ENCODE measurements at regions of chr18 and their contacts with region 1.

Region 1: GRCh38 chr18:22563098-22563707 is 145.5 kb upstream of the CTAGE1 start:
- DNase-seq: peak; percentile 93
- H3K4me3 ChIP-seq: peak overlapping the region; percentile 56
- H3K27ac ChIP-seq: peak overlapping the region; percentile 38; the same call in 1 of the 2 replicates
- H3K4me1 ChIP-seq: peaks cover 36% of the 10 kb centered on the region
- H3K27me3 ChIP-seq: no peaks in the 10 kb centered on the region

Region 2: DNA sequence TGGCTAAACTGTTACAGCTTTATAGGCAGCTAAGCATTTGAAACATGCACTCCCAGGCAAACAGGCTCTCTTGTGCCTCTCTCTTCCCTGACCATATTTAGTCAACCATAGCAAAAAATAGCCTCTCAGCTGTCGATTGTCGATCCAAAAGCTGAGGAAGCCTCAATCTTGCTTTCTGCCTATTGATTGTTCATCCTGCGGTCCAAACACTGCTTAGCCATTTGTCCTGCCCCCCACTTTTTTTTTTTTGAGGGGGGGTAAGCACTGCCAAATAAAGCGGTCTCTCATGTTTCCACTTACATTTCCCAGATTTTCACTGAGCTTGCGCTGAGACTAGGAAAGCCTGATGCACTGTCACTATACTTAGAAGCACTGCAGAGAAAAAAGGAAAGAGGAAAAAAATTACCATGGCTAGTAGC is 731.8 kb before region 1 on chr18:
- in situ Hi-C with region 1: no loop called
- DNase-seq: no peak
- H3K4me3 ChIP-seq: no peak overlapping the region
- H3K27ac ChIP-seq: no peak overlapping the region
- H3K4me1 ChIP-seq: peaks cover 12% of the 10 kb centered on the region
- H3K27me3 ChIP-seq: no peaks in the 10 kb centered on the region

Region 3: DNA sequence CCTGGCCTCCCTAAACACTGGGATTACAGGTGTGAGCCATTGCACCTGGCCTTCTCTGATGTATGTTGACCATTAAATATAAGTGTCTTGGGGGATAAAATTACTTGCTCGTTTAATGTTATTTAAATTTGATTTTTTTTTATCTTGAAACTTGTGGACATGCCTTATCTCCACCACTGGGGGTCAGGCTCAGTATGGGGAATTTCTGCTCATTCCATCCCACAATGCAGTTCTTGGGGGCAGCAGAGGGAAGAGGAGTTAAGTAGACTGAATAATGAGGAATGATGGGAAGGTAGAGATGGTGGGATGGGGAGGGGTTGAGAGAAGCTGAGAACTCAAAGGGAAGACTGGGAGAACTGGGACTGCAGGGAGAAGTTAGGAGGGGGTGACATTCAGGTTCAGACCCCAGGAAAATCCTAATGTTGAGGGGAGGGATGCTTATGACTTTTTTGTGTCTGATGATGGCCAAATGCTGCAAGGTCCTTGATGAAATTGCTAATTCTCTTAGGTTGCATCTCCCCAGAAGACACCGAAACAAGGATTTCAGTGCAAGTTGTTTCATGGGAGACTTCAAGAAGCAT is 648.4 kb before region 1 on chr18:
- in situ Hi-C with region 1: loop called (anchors 10 kb)
- DNase-seq: peak; percentile 70
- H3K4me3 ChIP-seq: no peak overlapping the region
- H3K27ac ChIP-seq: no peak overlapping the region
- H3K4me1 ChIP-seq: no peaks in the 10 kb centered on the region
- H3K27me3 ChIP-seq: peaks cover 25% of the 10 kb centered on the region

Region 4: DNA sequence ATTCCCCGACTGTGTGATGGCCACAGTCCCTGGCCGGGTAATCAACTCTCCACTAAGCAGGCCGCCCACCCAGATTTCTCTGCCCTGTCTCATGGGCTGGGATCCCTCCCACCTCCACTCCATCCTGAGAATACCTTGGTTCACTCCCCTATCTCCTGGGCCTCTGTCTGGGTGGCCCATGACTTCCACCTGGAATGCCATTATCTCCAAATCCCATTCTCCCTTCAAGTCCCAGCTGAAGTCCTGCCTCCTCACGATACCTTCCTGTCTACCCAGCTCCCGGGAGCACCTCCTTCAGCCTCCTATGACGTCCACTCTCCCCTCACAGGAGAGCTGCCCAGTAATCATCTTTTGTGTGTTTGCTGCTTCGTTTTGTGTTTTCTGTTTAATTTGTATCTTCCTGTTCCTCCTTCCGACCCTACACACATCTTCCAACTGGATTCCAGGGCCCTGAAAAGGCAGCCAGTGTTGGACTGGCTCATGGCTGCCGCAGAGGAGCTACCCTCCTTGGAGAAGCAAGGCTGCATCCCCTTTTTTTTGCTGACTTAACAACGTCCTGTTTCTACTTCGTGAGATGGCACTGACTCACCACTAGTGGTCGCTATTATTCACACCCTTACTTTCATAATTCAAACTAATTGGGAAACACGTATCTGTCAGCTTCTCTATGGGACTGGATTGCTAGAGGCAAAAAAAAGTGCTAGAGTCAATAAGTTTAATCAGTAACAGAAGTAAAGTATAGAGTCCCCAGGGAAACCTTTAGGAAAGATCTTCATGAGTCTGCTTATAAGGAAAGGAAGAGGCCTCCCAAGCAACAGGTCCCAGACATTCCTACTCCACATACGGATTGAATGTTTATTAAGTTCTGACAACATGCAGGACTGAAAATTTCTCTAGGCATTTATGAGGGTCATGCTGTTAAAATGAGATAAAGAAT is 565.7 kb before region 1 on chr18:
- in situ Hi-C with region 1: loop called (anchors 25 kb)
- DNase-seq: peak; percentile 53
- H3K4me3 ChIP-seq: no peak overlapping the region
- H3K27ac ChIP-seq: no peak overlapping the region
- H3K4me1 ChIP-seq: no peaks in the 10 kb centered on the region
- H3K27me3 ChIP-seq: no peaks in the 10 kb centered on the region

Region 5: DNA sequence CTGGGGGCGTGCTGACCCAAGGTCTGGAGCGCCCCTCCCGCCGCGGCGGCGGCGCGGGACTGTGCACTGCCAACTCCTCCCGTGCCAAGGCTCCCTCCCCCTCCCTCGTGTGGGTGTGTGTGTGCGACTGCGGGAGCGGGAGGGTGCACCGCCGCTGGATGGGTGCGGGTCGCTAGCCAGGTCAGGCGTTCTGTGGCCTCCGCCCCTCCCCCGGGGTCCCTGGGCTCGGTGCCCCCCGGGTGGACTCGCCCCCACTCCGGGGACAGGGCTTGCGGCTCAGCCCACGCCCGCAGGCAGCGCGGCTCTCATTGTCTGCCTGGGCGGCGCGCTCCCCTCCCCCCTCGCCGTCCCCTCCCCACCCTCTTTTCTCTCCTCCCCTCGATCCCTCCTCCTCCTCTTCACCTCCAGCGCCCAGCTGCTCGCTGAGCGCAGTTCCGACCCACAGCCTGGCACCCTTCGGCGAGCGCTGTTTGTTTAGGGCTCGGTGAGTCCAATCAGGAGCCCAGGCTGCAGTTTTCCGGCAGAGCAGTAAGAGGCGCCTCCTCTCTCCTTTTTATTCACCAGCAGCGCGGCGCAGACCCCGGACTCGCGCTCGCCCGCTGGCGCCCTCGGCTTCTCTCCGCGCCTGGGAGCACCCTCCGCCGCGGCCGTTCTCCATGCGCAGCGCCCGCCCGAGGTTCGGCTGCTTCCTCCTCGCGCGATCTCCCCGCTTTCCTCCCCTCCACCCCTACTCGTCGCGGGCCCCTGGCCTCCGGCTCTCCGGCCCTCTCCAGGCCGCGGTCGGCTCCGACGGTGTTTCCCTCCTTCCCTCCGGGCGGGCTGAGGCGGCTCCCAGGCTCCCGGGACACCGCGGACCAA is 394.0 kb before region 1 on chr18 and contains the start of gene GATA6:
- in situ Hi-C with region 1: loop called (anchors 5 kb)
- DNase-seq: peak; percentile 95
- H3K4me3 ChIP-seq: peak within 1 kb of the TSS; percentile 95
- H3K27ac ChIP-seq: peak within 1 kb of the TSS; percentile 82
- H3K4me1 ChIP-seq: peaks cover 14% of the 10 kb centered on the region; the same call in 1 of the 2 replicates
- H3K27me3 ChIP-seq: peaks cover 41% of the 10 kb centered on the region
- total RNA-seq, gene GATA6: 17.6 and 19.0 TPM in 2 replicates

Region 6: DNA sequence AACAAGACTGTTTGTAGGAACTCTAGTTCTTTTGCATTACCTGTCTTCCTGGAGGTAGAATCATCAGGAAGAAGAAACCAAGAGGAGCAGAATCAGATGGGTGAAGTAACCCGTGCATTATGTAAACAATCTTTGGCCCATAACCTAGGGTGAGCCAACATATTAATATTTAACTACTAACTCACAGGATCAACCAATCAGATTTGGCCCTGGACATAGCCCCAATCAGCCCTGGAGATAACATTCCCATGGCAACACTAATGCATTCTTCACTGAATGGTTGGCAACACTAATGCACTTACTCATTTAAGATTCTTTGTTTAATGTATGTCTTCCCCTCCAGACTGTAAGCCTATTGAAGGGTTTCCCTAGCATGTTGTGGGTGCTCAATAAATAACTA is 73.5 kb before region 1 on chr18:
- in situ Hi-C with region 1: no loop called
- DNase-seq: peak; percentile 21
- H3K4me3 ChIP-seq: no peak overlapping the region
- H3K27ac ChIP-seq: no peak overlapping the region
- H3K4me1 ChIP-seq: peaks cover 25% of the 10 kb centered on the region
- H3K27me3 ChIP-seq: no peaks in the 10 kb centered on the region

Region 7: GRCh38 chr18:22503803-22504202 is 59.4 kb before region 1 on chr18:
- in situ Hi-C with region 1: no loop called
- DNase-seq: peak; percentile 87
- H3K4me3 ChIP-seq: no peak overlapping the region
- H3K27ac ChIP-seq: peak overlapping the region; percentile 90
- H3K4me1 ChIP-seq: peaks cover 30% of the 10 kb centered on the region
- H3K27me3 ChIP-seq: no peaks in the 10 kb centered on the region

Measured in GM23248 (cell line).